Naive thymus-derived CD4-positive, alpha-beta T cell (primary cell): ENCODE measurements at regions of chr9 and their contacts with region 1.

Region 1: GRCh38 chr9:136849038-136849959 is at the start of gene PHPT1:
- DNase-seq: peak; percentile 91 to 98 (median 97)
- ATAC-seq: peak; percentile 96
- H3K4me3 ChIP-seq: peak within 1 kb of the TSS; percentile 99
- H3K4me3 Mint-ChIP-seq: peak within 1 kb of the TSS; percentile 86 to 97 (median 92)
- H3K27ac ChIP-seq: peak within 1 kb of the TSS; percentile 71
- H3K27ac Mint-ChIP-seq: peak within 1 kb of the TSS; percentile 40 to 94 (median 88)
- H3K4me1 ChIP-seq: peaks cover 15 to 17% of the 10 kb centered on the region in 2 donors
- H3K4me1 Mint-ChIP-seq: peaks cover 0 to 16% (median 10%) of the 10 kb centered on the region in 7 donors
- H3K27me3 ChIP-seq: no peaks in the 10 kb centered on the region
- H3K27me3 Mint-ChIP-seq: peaks cover 0 to 21% (median 0%) of the 10 kb centered on the region in 5 donors
- total RNA-seq, gene PHPT1: 17.7 to 167 (median 27.7) TPM

Region 2: GRCh38 chr9:136799854-136800657 is 49.2 kb before region 1 on chr9:
- CTCF ChIA-PET with region 1: no interaction called
- POLR2A ChIA-PET with region 1: no interaction called
- intact Hi-C with region 1: loop called (anchors 2 kb)
- DNase-seq: peak; percentile 58 to 89 (median 79)
- ATAC-seq: peak; percentile 90
- H3K4me3 ChIP-seq: peak overlapping the region; percentile 63
- H3K4me3 Mint-ChIP-seq: peak overlapping the region; percentile 82 to 92 (median 86)
- H3K27ac ChIP-seq: peak overlapping the region; percentile 59
- H3K27ac Mint-ChIP-seq: peak overlapping the region in 4 of 9 donors; percentile 25 to 81 (median 78)
- H3K4me1 ChIP-seq: peaks cover 10 to 24% of the 10 kb centered on the region in 2 donors
- H3K4me1 Mint-ChIP-seq: peaks cover 6 to 42% (median 35%) of the 10 kb centered on the region in 7 donors
- H3K27me3 ChIP-seq: no peaks in the 10 kb centered on the region
- H3K27me3 Mint-ChIP-seq: peaks cover 0 to 45% (median 0%) of the 10 kb centered on the region in 5 donors

Region 3: GRCh38 chr9:136865735-136866103 is 16.4 kb after region 1 on chr9:
- CTCF ChIA-PET with region 1: no interaction called
- POLR2A ChIA-PET with region 1: interaction called, 3 read pairs
- intact Hi-C with region 1: loop called (anchors 1 kb)
- DNase-seq: no peak
- ATAC-seq: no peak
- H3K4me3 ChIP-seq: peak overlapping the region; percentile 68
- H3K4me3 Mint-ChIP-seq: peak overlapping the region; percentile 55 to 94 (median 87)
- H3K27ac ChIP-seq: peak overlapping the region; percentile 99
- H3K27ac Mint-ChIP-seq: peak overlapping the region; percentile 36 to 94 (median 87)
- H3K4me1 ChIP-seq: peaks cover 7 to 8% of the 10 kb centered on the region in 2 donors
- H3K4me1 Mint-ChIP-seq: peaks cover 4 to 24% (median 19%) of the 10 kb centered on the region in 7 donors
- H3K27me3 ChIP-seq: no peaks in the 10 kb centered on the region
- H3K27me3 Mint-ChIP-seq: no peaks in the 10 kb centered on the region

Region 4: GRCh38 chr9:136902259-136902821 is 53.0 kb after region 1 on chr9:
- CTCF ChIA-PET with region 1: no interaction called
- POLR2A ChIA-PET with region 1: no interaction called
- intact Hi-C with region 1: loop called (anchors 1 to 5 kb)
- DNase-seq: peak; percentile 38 to 91 (median 66)
- ATAC-seq: peak; percentile 93
- H3K4me3 ChIP-seq: peak overlapping the region; percentile 24
- H3K4me3 Mint-ChIP-seq: peak overlapping the region; percentile 62 to 81 (median 75)
- H3K27ac ChIP-seq: peak overlapping the region; percentile 76
- H3K27ac Mint-ChIP-seq: peak overlapping the region; percentile 89 to 98 (median 94)
- H3K4me1 ChIP-seq: peaks cover 26 to 30% of the 10 kb centered on the region in 2 donors
- H3K4me1 Mint-ChIP-seq: peaks cover 12 to 59% (median 36%) of the 10 kb centered on the region in 7 donors
- H3K27me3 ChIP-seq: no peaks in the 10 kb centered on the region
- H3K27me3 Mint-ChIP-seq: no peaks in the 10 kb centered on the region

Region 5: DNA sequence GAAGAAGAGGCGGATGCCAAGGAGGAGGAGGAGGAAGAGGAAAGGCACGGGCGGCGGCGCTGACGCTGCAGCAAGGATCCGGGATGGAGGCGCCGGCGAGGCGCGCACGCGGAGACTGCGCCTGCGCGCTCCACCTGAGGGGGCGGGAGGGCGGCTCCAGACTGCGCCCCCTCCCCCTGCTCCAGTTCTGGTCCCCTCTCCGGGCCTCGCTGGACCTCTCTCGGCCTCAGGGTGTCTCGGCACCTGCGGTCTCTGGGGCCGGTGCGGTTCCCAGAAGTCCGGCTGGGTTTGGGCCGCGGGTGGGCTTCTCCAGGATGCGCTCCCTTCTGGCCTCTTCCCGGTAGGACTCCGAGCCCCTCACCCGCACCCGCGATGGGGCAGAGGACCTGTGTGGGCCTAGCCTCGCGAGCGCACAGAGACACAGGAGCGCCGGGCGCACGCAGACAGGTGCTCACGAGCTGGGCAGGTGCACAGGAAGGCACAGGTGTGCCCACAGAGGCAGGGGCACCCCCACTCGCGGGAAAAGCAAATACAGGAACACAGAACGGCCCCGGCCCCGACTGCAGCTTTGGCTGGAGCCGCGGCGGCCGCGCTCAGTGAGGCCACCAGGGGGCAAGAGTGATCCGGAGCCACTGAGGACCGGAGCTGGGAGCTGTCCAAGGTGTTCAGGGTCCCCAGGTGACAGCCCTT is 196.9 kb after region 1 on chr9 and contains the start of gene NPDC1:
- CTCF ChIA-PET with region 1: no interaction called
- POLR2A ChIA-PET with region 1: no interaction called
- intact Hi-C with region 1: loop called in 1 of 2 experiments (anchors 5 kb)
- DNase-seq: peak; percentile 55 to 86 (median 66)
- ATAC-seq: peak; percentile 92
- H3K4me3 ChIP-seq: peak within 1 kb of the TSS; percentile 46
- H3K4me3 Mint-ChIP-seq: peak within 1 kb of the TSS; percentile 29 to 79 (median 59)
- H3K27ac ChIP-seq: no peak within 1 kb of the TSS
- H3K27ac Mint-ChIP-seq: no peak within 1 kb of the TSS
- H3K4me1 ChIP-seq: peaks cover 9 to 25% of the 10 kb centered on the region in 2 donors
- H3K4me1 Mint-ChIP-seq: peaks cover 0 to 11% (median 9%) of the 10 kb centered on the region in 7 donors
- H3K27me3 ChIP-seq: peaks cover 9 to 35% of the 10 kb centered on the region in 2 donors
- H3K27me3 Mint-ChIP-seq: peaks cover 15 to 46% (median 34%) of the 10 kb centered on the region in 5 donors
- total RNA-seq, gene NPDC1: 2.3 to 37.5 (median 7.4) TPM

Region 6: GRCh38 chr9:137086531-137087408 is 237.5 kb after region 1 on chr9 and contains the start of gene MAN1B1:
- CTCF ChIA-PET with region 1: no interaction called
- POLR2A ChIA-PET with region 1: no interaction called
- intact Hi-C with region 1: loop called in 1 of 2 experiments (anchors 5 kb)
- DNase-seq: peak; percentile 96 to 100 (median 99)
- ATAC-seq: peak; percentile 92
- H3K4me3 ChIP-seq: peak within 1 kb of the TSS; percentile 73
- H3K4me3 Mint-ChIP-seq: peak within 1 kb of the TSS; percentile 88 to 96 (median 92)
- H3K27ac ChIP-seq: peak within 1 kb of the TSS; percentile 92
- H3K27ac Mint-ChIP-seq: peak within 1 kb of the TSS; percentile 92 to 98 (median 95)
- H3K4me1 ChIP-seq: peaks cover 18% of the 10 kb centered on the region in 2 donors
- H3K4me1 Mint-ChIP-seq: peaks cover 25 to 34% (median 30%) of the 10 kb centered on the region in 7 donors
- H3K27me3 ChIP-seq: no peaks in the 10 kb centered on the region
- H3K27me3 Mint-ChIP-seq: no peaks in the 10 kb centered on the region
- total RNA-seq, gene MAN1B1: 57.3 to 74.2 (median 70.2) TPM

Region 7: GRCh38 chr9:137168905-137169856 is 319.9 kb after region 1 on chr9:
- CTCF ChIA-PET with region 1: no interaction called
- POLR2A ChIA-PET with region 1: no interaction called
- intact Hi-C with region 1: loop called in 1 of 2 experiments (anchors 5 kb)
- DNase-seq: peak in 3 of 9 donors; percentile 19 to 40 (median 21)
- ATAC-seq: peak; percentile 16
- H3K4me3 ChIP-seq: no peak overlapping the region
- H3K4me3 Mint-ChIP-seq: peak overlapping the region in 8 of 10 donors; percentile 58 to 75 (median 65)
- H3K27ac ChIP-seq: no peak overlapping the region
- H3K27ac Mint-ChIP-seq: no peak overlapping the region
- H3K4me1 ChIP-seq: no peaks in the 10 kb centered on the region
- H3K4me1 Mint-ChIP-seq: peaks cover 0 to 11% (median 4%) of the 10 kb centered on the region in 7 donors
- H3K27me3 ChIP-seq: peaks cover 11 to 15% of the 10 kb centered on the region in 2 donors
- H3K27me3 Mint-ChIP-seq: peaks cover 4 to 48% (median 23%) of the 10 kb centered on the region in 5 donors